IMR-90 (cell line): ENCODE measurements at regions of chr17 and their contacts with region 1.

Region 1: DNA sequence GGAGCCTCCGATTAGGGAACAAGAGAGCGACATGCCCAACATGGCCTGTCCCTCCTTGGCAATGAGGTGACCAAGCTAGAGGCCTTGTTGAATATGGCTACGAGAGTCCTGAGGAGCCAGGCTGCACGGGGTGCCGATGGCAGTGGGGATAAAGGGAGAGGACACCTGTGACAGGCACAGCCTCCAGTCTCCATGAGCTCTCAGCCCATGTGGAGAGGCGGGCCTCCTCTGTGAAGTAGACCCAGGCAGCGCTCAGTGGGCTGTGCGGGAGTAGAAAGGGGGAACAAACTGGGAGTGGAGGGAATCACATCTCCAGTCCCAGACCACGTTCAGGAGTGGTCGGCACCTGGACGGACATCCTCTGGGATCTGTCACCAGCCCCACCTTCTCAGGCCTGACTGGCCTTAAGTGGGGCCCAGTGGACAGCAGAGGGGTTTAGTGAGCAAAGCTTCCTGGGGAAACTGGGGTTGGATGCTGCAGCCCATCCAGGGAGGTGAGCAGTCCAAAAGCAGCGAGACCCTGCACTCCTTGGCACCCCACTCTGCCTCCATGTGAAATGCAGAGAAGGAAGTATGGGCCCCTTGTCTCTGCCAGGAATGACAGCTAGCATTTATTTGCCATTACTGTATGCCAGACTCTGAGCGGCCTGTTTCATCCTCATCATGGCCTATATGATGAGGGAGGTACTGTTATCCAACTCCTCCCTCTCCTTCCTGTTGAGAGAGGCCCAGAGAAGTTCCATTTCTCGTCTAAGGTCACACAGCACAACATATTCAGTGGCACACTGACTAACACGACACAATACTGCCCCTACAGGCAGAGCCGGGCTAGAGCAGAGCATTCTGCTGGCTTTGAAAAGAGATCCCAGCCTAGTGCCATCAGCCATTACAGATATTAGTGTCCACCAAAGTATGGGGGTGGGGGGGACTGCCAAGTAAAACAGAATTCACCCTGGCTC is 4.5 kb upstream of the TMEM92 start:
- DNase-seq: peak; percentile 83
- ATAC-seq: peak; percentile 62
- H3K4me3 ChIP-seq: peak overlapping the region; percentile 2; the same call in 1 of the 2 replicates
- H3K27ac ChIP-seq: peak overlapping the region; percentile 88
- H3K4me1 ChIP-seq: peaks cover 71% of the 10 kb centered on the region
- H3K27me3 ChIP-seq: no peaks in the 10 kb centered on the region
- CTCF ChIP-seq: peak; percentile 94
- POLR2A ChIP-seq: no peak
- RAD21 ChIP-seq: peak; percentile 94

Region 2: DNA sequence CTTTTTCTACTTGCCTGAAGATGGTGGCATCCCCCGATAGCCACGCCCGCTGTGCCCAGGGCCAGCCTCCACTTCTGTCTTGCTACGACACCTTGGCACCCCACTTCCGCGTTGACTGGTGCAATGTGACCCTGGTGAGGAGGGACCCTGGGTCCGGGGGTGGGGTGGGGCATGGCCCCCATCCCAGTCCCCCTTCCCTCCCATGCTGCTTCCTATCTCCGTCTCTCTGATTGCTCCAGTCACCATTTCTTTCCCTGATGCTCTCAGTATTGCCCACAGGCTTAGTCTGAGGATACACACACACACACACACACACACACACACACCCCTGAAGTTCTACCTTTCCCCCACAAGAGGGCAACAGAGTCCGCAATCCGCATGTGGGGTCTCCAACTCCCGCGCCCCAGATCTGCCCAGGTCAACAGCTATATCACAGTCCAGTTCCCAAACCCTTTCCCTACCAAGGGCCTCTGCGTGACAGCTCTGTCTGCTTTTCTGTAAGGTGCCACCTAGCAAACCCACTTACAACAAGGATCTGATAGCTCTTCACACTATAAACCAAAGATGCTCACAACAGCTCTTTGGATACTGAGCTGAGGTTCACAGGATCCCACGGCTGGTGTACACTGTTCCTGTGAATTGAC is 100.5 kb before region 1 on chr17:
- CTCF ChIA-PET with region 1: interaction called, 10 read pairs
- POLR2A ChIA-PET with region 1: interaction called, 4 read pairs
- dilution Hi-C with region 1: no loop called
- in situ Hi-C with region 1: no loop called
- intact Hi-C with region 1: loop called (anchors 1 kb)
- DNase-seq: peak; percentile 74
- ATAC-seq: peak; percentile 66
- H3K4me3 ChIP-seq: no peak overlapping the region
- H3K27ac ChIP-seq: no peak overlapping the region
- H3K4me1 ChIP-seq: peaks cover 8% of the 10 kb centered on the region
- H3K27me3 ChIP-seq: no peaks in the 10 kb centered on the region
- CTCF ChIP-seq: peak; percentile 96
- POLR2A ChIP-seq: peak; percentile 59
- RAD21 ChIP-seq: peak; percentile 92

Region 3: GRCh38 chr17:50177983-50178834 is 91.5 kb before region 1 on chr17:
- CTCF ChIA-PET with region 1: interaction called, 13 read pairs
- POLR2A ChIA-PET with region 1: interaction called, 6 read pairs
- dilution Hi-C with region 1: no loop called
- in situ Hi-C with region 1: no loop called
- intact Hi-C with region 1: loop called (anchors 1 kb)
- DNase-seq: peak; percentile 99
- ATAC-seq: peak; percentile 63
- H3K4me3 ChIP-seq: no peak overlapping the region
- H3K27ac ChIP-seq: peak overlapping the region; percentile 84
- H3K4me1 ChIP-seq: peaks cover 30% of the 10 kb centered on the region
- H3K27me3 ChIP-seq: no peaks in the 10 kb centered on the region
- CTCF ChIP-seq: peak; percentile 53
- POLR2A ChIP-seq: no peak; the same call in 1 of the 2 replicates
- RAD21 ChIP-seq: no peak

Region 4: DNA sequence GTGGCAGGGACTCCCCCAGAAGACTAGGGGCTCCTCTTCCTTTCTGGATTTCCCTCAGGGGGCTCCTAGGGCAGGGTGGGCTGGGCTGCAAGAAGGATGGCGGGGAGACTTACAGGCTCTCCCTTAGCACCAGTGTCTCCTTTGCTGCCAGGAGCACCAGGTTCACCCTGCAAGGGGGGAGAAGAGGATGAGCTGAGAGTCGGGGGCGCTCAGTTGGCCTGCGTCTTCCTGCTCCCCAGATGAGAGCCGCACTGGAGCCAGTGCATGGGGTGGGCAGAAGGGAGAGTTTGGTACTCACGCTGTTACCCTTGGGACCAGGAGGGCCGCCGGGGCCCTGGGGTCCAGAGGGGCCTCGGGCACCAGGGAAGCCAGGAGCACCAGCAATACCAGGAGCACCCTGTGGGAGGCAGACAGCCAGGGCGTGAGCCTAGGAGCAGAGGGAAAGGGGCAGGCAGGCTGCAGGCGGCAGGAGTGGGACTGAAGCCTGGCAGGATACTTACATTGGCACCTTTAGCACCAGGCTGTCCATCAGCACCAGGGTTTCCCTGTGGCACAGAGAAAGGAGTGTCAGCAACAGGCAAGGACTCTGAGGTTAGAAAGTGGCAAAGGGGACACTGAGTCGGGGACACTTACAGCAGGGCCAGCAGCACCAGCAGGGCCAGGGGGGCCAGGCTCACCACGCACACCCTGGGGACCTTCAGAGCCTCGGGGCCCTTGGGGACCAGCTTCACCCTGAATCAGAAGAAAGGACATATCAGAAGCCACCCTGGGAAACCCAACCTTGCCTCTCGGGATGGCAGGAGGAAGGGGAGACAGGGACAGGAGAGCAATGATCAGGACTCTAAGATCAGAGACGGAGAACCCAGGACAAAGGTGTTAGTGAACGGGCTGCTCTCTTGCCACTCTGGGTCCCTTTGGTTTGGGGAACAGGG is 74.6 kb before region 1 on chr17:
- CTCF ChIA-PET with region 1: interaction called, 6 read pairs
- POLR2A ChIA-PET with region 1: interaction called, 149 read pairs
- dilution Hi-C with region 1: no loop called
- in situ Hi-C with region 1: loop called (anchors 5 kb)
- intact Hi-C with region 1: loop called (anchors 1 kb)
- DNase-seq: peak; percentile 74
- ATAC-seq: peak; percentile 1
- H3K4me3 ChIP-seq: no peak overlapping the region
- H3K27ac ChIP-seq: peak overlapping the region; percentile 99
- H3K4me1 ChIP-seq: peaks cover 57% of the 10 kb centered on the region
- H3K27me3 ChIP-seq: no peaks in the 10 kb centered on the region
- CTCF ChIP-seq: peak; percentile 37; the same call in 1 of the 2 replicates
- POLR2A ChIP-seq: no peak
- RAD21 ChIP-seq: 0 out of 2 replicates have a peak, but pooled peaks have one; percentile 13

Region 5: DNA sequence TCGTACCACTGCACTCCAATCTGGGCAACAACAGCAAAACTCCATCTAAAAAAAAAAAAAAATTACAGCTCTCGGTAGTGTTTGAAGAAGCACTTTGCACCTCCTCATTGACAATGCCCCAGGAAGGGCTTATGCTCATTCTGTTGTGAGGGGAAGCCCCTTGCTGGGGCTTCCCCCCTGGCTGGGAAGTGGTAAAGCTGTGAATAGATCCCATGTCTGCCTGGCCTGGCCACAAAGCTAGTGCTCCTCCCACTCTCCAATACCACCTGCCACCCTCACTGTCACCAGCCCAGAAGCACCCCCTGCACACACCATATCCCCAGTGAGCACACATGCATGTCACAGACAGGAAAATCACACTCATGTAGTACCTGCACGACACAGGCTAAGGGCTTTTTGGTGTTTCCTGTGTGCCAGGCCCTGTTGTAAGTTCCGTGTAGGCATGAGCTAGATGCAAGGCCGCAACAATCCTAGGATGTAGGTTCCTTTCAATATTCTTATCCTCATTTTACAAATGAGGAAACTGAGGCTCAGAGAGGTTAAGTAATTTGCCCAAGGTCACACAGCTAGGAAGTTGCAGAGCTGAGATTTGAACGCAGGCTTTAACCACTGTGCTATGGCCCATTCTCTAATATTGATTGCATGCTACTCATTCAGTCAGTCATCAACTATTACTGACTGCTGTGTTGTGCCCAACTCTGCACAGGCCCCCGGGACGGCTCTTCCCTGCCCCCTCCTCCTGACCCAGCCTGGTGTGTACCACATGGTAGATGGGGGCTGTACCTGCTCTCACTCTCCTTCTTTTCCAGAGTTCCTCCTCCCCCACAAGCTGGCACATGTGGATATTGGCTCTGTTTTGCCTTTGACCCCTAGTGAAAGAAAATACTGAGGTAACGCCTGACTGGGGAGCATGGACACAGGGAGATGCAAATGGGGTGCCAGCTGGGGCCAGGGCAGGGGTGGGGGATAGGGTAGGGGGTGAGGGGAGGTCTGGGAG is 56.4 kb before region 1 on chr17:
- CTCF ChIA-PET with region 1: interaction called, 10 read pairs
- POLR2A ChIA-PET with region 1: interaction called, 19 read pairs
- dilution Hi-C with region 1: no loop called
- in situ Hi-C with region 1: no loop called
- intact Hi-C with region 1: no loop called
- DNase-seq: peak; percentile 51
- ATAC-seq: no peak
- H3K4me3 ChIP-seq: no peak overlapping the region
- H3K27ac ChIP-seq: peak overlapping the region; percentile 17; the same call in 1 of the 2 replicates
- H3K4me1 ChIP-seq: peaks cover 55% of the 10 kb centered on the region
- H3K27me3 ChIP-seq: no peaks in the 10 kb centered on the region
- CTCF ChIP-seq: peak; percentile 27; the same call in 1 of the 2 replicates
- POLR2A ChIP-seq: no peak
- RAD21 ChIP-seq: peak; percentile 41; the same call in 1 of the 2 replicates

Region 6: GRCh38 chr17:50218771-50219315 is 50.9 kb before region 1 on chr17:
- CTCF ChIA-PET with region 1: interaction called, 10 read pairs
- POLR2A ChIA-PET with region 1: interaction called, 4 read pairs
- dilution Hi-C with region 1: no loop called
- in situ Hi-C with region 1: no loop called
- intact Hi-C with region 1: loop called (anchors 1 kb)
- DNase-seq: peak; percentile 96
- ATAC-seq: peak; percentile 61
- H3K4me3 ChIP-seq: no peak overlapping the region
- H3K27ac ChIP-seq: peak overlapping the region; percentile 65
- H3K4me1 ChIP-seq: peaks cover 46% of the 10 kb centered on the region
- H3K27me3 ChIP-seq: no peaks in the 10 kb centered on the region
- CTCF ChIP-seq: no peak
- POLR2A ChIP-seq: peak; percentile 68
- RAD21 ChIP-seq: no peak